ENCODE measurements at regions of chr10 and their contacts with region 1.

Region 1: DNA sequence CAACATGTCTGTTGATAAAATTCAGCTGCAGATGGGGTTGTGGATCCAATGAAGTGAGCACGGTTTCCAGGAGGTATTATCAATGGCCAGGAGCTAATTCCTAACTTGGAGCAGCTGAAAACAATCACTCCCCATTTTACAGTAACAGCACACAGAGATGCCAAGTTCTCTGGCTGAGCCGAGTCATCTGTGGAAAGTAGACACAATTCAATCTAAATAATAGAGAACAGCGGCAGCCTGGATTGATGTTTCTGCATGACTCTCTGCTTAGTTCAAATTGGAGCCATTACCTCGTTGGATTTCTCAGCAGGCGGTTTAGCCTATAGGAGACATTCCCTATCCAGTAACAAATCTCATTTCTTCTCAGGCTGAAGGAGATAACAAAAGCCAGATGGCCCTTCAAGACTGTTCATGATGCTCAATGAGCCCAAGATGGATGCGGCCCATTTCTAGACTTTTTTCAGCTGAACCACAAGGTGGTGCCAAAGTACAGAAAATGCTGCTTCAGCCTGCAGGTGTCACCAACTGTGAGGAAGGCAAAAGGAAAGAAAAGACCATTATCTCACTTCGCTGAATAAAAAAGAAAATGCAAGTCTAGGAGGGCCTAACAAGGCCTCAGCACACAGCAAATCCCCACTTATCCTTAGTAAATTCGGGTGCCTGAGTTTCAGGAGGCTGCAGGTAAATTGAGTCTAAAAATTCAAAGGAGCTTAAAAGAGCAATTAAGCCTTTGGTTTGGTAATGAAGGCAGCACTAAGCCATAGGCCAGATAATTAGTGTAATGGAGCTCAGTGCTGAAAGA is 83.7 kb downstream of the SLC16A9 start:
- DNase-seq: peak; percentile 78
- ATAC-seq: peak; percentile 89
- H3K4me3 ChIP-seq: no peak overlapping the region
- H3K4me3 Mint-ChIP-seq: no peak overlapping the region
- H3K27ac ChIP-seq: no peak overlapping the region
- H3K27ac Mint-ChIP-seq: no peak overlapping the region
- H3K4me1 ChIP-seq: no peaks in the 10 kb centered on the region
- H3K4me1 Mint-ChIP-seq: peaks cover 3% of the 10 kb centered on the region
- H3K27me3 ChIP-seq: no peaks in the 10 kb centered on the region
- H3K27me3 Mint-ChIP-seq: no peaks in the 10 kb centered on the region
- CTCF ChIP-seq: peak; percentile 87

Region 2: DNA sequence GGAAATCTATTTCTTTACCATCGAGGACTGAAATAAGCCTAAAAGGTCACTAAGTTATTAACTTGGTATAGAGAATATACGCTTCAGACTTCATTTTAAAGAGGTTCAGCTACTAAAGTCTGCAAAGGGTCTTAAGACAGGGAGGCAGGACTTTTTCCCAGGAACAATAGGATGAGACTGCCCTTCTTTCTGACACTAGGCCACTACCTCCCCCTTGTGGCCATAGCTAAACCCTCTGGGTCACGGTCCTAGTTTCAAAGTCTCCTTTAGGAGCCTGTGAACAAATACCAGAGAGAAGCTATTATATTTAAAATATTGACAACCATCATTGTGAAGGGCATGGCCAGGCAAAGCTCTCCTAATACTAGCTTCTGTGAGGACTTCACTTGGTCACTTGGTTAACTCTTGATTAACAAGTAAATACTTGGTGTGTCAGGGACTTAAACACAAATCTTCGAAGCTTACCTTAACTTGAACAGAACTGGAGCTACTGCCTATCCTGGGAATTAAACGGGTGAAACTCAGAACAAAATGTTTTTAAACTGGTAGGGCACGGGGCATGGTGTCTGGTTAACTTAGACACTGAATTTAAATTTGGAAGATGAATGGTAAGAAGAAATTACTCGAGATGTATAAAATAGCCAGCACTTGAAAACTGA is 204.8 kb after region 1 on chr10:
- CTCF ChIA-PET with region 1: interaction called, 7 read pairs
- POLR2A ChIA-PET with region 1: no interaction called
- intact Hi-C with region 1: loop called (anchors 1 kb)
- DNase-seq: peak; percentile 54
- ATAC-seq: no peak
- H3K4me3 ChIP-seq: no peak overlapping the region
- H3K4me3 Mint-ChIP-seq: no peak overlapping the region
- H3K27ac ChIP-seq: no peak overlapping the region
- H3K27ac Mint-ChIP-seq: no peak overlapping the region
- H3K4me1 ChIP-seq: peaks cover 24 to 36% of the 10 kb centered on the region in 2 donors
- H3K4me1 Mint-ChIP-seq: peaks cover 72% of the 10 kb centered on the region
- H3K27me3 ChIP-seq: no peaks in the 10 kb centered on the region
- H3K27me3 Mint-ChIP-seq: no peaks in the 10 kb centered on the region
- CTCF ChIP-seq: peak; percentile 75

Region 3: GRCh38 chr10:60099998-60100747 is 474.3 kb after region 1 on chr10:
- CTCF ChIA-PET with region 1: interaction called, 18 read pairs
- POLR2A ChIA-PET with region 1: no interaction called
- intact Hi-C with region 1: loop called (anchors 5 kb)
- DNase-seq: peak; percentile 61
- ATAC-seq: peak; percentile 49
- H3K4me3 ChIP-seq: no peak overlapping the region
- H3K4me3 Mint-ChIP-seq: no peak overlapping the region
- H3K27ac ChIP-seq: no peak overlapping the region
- H3K27ac Mint-ChIP-seq: no peak overlapping the region
- H3K4me1 ChIP-seq: no peaks in the 10 kb centered on the region
- H3K4me1 Mint-ChIP-seq: no peaks in the 10 kb centered on the region
- H3K27me3 ChIP-seq: no peaks in the 10 kb centered on the region
- H3K27me3 Mint-ChIP-seq: peaks cover 4% of the 10 kb centered on the region
- CTCF ChIP-seq: peak; percentile 89

Region 4: GRCh38 chr10:60426400-60426799 is 800.5 kb after region 1 on chr10:
- CTCF ChIA-PET with region 1: no interaction called
- POLR2A ChIA-PET with region 1: no interaction called
- intact Hi-C with region 1: loop called (anchors 5 kb)
- DNase-seq: no peak
- ATAC-seq: no peak
- H3K4me3 ChIP-seq: no peak overlapping the region
- H3K4me3 Mint-ChIP-seq: no peak overlapping the region
- H3K27ac ChIP-seq: no peak overlapping the region
- H3K27ac Mint-ChIP-seq: no peak overlapping the region
- H3K4me1 ChIP-seq: peaks cover 0 to 9% of the 10 kb centered on the region in 2 donors
- H3K4me1 Mint-ChIP-seq: peaks cover 6% of the 10 kb centered on the region
- H3K27me3 ChIP-seq: no peaks in the 10 kb centered on the region
- H3K27me3 Mint-ChIP-seq: no peaks in the 10 kb centered on the region
- CTCF ChIP-seq: no peak

Region 5: DNA sequence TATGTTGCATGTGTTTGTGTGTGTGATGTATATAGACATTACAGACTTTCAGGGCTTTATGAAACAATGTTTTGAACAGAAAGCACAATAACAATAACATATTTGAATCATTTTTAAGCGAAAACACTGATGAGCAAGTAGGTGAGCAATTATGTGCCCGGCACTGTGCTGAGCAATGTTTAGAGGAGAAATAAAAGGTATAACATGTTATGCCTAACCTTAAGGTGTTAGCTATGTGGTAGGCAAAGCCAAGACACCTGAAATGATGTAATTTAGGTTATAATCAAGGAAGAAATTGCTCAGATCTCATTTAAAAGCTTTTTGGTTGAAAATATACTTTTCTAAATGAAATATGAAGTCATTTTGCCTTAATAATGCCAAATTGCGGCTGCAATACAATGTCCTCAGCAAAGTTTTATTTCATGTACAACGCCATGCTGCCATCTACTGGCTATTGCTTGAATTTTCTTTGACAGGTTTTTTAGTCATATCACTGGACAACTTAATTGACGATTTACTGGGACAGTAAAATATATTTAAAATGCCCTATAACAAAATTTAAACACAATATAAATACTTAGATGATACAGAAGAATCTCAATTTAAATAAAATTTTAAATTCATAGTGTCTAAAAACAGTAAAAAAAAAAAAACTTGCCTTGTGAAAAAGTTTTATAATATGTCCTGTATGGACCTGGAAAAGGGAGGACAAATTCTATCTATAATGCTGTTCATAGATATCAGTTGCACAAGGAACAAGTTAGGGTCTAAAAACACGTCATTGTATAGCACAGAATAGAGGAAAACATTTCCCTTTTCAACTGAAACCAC is 1021.3 kb after region 1 on chr10:
- CTCF ChIA-PET with region 1: interaction called, 15 read pairs
- POLR2A ChIA-PET with region 1: no interaction called
- intact Hi-C with region 1: loop called (anchors 1 kb)
- DNase-seq: peak; percentile 68
- ATAC-seq: peak; percentile 61
- H3K4me3 ChIP-seq: no peak overlapping the region
- H3K4me3 Mint-ChIP-seq: no peak overlapping the region
- H3K27ac ChIP-seq: no peak overlapping the region
- H3K27ac Mint-ChIP-seq: no peak overlapping the region
- H3K4me1 ChIP-seq: peaks cover 0 to 2% of the 10 kb centered on the region in 2 donors
- H3K4me1 Mint-ChIP-seq: peaks cover 6% of the 10 kb centered on the region
- H3K27me3 ChIP-seq: no peaks in the 10 kb centered on the region
- H3K27me3 Mint-ChIP-seq: no peaks in the 10 kb centered on the region
- CTCF ChIP-seq: peak; percentile 92

Region 6: DNA sequence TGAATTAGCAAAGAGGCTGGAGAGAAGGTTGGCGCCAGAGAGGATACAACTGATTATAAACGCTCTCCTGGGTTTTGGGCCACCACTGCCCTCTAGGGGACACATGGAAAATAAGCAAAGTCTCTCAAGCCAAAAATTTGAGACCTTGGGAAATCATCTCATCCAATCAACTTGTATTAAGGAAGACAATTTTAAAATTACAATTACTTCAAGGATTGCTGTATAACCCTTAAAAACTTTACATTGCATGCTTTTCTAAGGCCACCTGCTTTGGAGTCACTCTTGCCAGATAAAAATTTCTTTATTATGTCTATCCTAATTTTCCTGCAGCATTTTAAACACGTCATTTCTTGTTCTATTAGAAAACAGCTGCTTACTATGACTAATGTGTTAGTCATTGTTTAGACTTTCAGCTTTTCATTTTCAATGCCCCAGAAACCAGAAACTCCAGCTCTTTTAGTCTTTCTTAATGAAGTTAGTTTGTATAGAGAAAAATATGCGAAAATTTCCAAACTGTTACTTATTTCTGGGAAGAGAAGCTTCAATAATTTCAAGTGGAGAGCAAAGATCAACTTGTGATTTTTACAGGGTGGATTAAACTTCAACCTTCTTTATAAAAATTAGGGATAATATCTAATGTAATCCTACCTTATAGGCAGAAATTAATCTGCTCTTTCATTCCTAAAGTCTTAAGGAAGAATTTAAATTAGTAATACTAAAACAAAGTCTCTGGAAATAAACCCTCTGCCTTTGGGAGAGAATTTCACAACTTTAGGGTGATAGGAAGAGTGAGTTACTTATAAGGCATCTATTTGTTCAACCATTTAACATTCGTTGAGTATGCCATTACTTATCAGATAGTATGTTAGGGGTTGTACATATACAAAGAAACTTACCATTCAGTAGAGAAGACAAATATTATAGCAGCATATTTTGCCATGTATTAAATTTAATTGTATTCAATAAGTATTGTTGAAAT is 1338.6 kb after region 1 on chr10:
- CTCF ChIA-PET with region 1: interaction called, 4 read pairs
- POLR2A ChIA-PET with region 1: no interaction called
- intact Hi-C with region 1: loop called (anchors 2 kb)
- DNase-seq: peak; percentile 67
- ATAC-seq: peak; percentile 58
- H3K4me3 ChIP-seq: no peak overlapping the region
- H3K4me3 Mint-ChIP-seq: no peak overlapping the region
- H3K27ac ChIP-seq: no peak overlapping the region
- H3K27ac Mint-ChIP-seq: no peak overlapping the region
- H3K4me1 ChIP-seq: peaks cover 12 to 13% of the 10 kb centered on the region in 2 donors
- H3K4me1 Mint-ChIP-seq: peaks cover 20% of the 10 kb centered on the region
- H3K27me3 ChIP-seq: no peaks in the 10 kb centered on the region
- H3K27me3 Mint-ChIP-seq: peaks cover 5% of the 10 kb centered on the region
- CTCF ChIP-seq: peak; percentile 93

Measured in B cell (primary cell).